Activated CD8-positive, alpha-beta memory T cell treated with anti-CD3 and anti-CD28 coated beads, Interleukin-2, amount 10 ng/mL, durations not matched to agents 7 days and 5 days (primary cell): ENCODE measurements at regions of chr5 and their contacts with region 1.

Region 1: DNA sequence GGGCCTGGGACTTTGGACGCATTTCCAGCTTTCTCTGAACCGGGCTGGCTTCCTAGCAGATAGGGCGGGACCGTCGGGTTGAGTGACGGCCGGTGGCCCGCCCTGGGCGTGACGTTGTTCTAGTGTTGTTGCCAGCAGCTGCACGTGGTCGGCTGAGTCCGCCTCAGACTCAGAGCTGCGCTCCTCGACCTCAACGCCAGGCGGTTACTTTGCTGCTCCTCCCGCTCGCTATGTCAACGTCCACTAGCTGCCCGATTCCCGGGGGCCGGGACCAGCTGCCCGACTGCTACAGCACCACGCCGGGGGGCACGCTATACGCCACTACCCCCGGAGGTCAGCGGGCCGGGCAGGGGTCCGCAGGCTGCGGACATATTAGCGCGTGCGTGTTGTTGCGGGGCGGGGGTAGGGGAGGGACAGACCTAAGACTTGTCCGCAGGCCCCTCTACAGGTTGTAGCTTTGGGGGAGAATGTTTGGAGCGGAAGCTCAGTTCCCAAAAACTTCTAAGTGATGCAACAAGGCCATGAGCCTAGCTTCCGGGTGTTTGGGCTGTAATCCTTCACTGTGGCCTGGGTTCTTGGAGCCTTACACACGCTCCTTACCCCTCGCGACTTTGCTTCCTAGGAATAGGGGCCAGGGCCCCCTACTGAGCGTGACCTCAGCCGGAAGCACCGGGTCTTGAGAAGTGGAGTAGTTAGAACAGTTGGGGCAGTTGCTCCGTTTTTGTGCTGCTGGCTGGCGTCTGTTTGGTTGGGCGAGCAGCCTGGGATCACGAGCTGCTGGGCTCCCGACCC is at the start of gene EIF4EBP3:
- DNase-seq: peak; percentile 92
- ATAC-seq: peak; percentile 99
- H3K4me3 Mint-ChIP-seq: peak within 1 kb of the TSS; percentile 67
- H3K27ac Mint-ChIP-seq: peak within 1 kb of the TSS; percentile 91
- H3K4me1 Mint-ChIP-seq: peaks cover 43% of the 10 kb centered on the region
- H3K27me3 Mint-ChIP-seq: no peaks in the 10 kb centered on the region
- total RNA-seq, gene EIF4EBP3: 7.4 to 9.0 TPM

Region 2: GRCh38 chr5:140639148-140639979 is 91.7 kb after region 1 on chr5 and contains the start of gene TMCO6:
- CTCF ChIA-PET with region 1: interaction called, 16 read pairs
- DNase-seq: peak; percentile 98
- ATAC-seq: peak; percentile 96
- H3K4me3 Mint-ChIP-seq: peak within 1 kb of the TSS; percentile 94
- H3K27ac Mint-ChIP-seq: peak within 1 kb of the TSS; percentile 98
- H3K4me1 Mint-ChIP-seq: peaks cover 45% of the 10 kb centered on the region
- H3K27me3 Mint-ChIP-seq: no peaks in the 10 kb centered on the region
- total RNA-seq, gene TMCO6: 33.1 to 35.3 TPM

Region 3: DNA sequence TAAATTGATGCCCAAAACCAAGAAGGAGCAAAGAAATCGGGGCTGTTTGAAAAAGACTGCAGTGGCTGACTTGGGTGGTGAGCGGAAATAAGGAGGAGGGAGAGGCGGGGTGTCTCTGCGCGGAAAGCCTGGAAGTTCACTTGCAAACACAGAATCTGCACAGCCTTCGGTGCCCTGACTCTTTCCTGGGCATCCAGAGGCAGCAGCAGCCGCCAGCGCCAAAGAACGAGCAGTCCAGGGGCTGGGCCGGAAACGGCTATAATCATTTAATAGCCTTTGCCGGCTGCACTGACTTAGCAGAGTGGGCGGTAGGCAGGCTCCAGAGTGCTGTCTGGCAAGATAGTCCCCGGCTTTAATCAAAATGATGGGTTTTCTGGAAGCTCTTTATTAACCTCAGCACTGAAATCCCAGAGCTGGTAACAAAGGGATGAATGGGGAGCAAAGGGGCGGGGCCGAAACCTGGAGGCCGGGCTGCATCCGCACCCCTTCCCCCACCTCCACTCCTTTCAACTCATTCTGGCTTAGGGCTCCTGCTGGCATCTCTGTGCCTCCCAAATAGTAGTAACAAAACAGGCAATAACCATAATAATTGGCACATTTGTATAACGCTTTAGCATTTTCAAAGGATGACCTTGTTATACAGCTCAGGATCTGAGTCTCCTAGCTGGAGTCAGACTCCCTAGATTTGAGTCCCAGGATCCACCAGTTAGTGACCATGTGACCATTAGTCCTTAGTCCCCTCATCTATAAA is 454.3 kb after region 1 on chr5:
- CTCF ChIA-PET with region 1: no interaction called
- DNase-seq: no peak
- ATAC-seq: no peak
- H3K4me3 Mint-ChIP-seq: no peak overlapping the region
- H3K27ac Mint-ChIP-seq: no peak overlapping the region
- H3K4me1 Mint-ChIP-seq: no peaks in the 10 kb centered on the region
- H3K27me3 Mint-ChIP-seq: peaks cover 17% of the 10 kb centered on the region